Activated CD4-positive, alpha-beta T cell treated with anti-CD3 and anti-CD28 coated beads, Interleukin-2, amount 10 ng/mL, durations not matched to agents 24 days and 14 days (primary cell): ENCODE measurements at regions of chr10 and their contacts with region 1.

Region 1: DNA sequence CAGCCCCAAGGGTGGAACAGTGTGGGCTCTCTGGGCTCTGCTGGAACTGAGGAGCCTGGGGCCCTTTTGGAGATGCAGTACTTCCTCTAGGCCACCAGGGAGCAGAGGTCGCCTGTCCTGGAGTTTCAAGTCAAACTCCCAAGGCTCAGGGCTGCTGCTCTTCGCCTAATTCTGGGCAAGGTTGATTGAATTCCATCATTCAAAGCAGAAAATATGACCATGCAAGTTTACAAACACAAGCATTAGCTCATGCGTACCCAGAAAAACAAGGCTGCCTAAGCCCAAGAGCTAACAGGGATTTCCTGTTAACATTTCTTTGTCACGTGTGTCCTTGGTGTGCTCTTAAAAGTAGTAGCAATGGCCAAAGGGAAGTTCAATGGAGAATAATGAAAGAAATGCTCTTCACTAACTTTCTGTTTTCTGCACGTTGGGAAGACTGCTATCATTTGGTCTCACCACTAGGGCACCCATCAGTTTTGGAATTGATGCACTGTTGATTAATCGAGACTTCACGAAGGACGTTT is 20.1 kb downstream of the LDB3 start:
- DNase-seq: peak; percentile 84
- H3K4me3 Mint-ChIP-seq: no peak overlapping the region
- H3K27ac Mint-ChIP-seq: no peak overlapping the region
- H3K4me1 Mint-ChIP-seq: peaks cover 4% of the 10 kb centered on the region
- H3K27me3 Mint-ChIP-seq: peaks cover 1% of the 10 kb centered on the region

Region 2: DNA sequence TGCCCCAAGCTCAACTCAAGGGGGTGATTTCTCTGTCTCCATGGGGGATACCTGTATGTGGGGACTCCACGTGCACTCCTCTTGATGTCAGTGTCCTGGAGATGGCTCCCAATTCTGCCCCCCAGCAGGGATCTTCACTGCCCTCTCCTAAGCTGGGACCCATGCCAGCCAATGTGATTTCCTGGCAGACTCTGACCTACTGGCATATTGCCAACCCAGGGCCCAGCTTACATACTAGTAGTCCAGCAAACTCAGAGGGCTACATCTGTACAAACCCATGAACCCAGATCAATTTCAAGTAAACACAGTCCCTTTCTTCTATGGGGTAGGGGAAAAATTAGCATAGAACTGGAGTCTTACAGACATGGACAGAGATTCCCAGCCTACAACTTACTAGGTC is 41.8 kb after region 1 on chr10:
- intact Hi-C with region 1: no loop called
- DNase-seq: no peak
- H3K4me3 Mint-ChIP-seq: no peak overlapping the region
- H3K27ac Mint-ChIP-seq: no peak overlapping the region
- H3K4me1 Mint-ChIP-seq: no peaks in the 10 kb centered on the region
- H3K27me3 Mint-ChIP-seq: peaks cover 19% of the 10 kb centered on the region

Region 3: DNA sequence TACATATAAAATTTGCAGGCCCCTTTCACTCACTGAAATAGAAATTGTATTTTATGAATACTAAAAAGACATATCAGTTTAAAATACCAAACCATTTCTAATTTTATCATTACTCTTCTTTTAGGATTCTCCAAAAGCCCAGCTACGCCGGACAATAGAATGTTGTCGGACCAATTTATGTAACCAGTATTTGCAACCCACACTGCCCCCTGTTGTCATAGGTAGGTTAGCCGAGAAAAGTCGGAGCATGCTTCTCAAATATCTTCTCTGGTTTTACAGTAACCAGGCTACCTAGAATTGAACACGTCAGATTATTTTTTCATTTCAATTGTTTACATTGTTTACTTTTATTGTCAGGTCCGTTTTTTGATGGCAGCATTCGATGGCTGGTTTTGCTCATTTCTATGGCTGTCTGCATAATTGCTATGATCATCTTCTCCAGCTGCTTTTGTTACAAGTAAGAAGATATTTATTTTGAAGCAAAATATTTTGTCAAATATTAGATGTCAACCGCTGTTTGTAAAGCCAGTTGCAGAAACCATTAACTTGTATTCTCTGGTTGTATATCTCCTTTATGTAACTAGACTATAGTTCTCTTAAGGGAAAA is 211.3 kb after region 1 on chr10:
- intact Hi-C with region 1: loop called (anchors 1 kb)
- DNase-seq: peak; percentile 81
- H3K4me3 Mint-ChIP-seq: no peak overlapping the region
- H3K27ac Mint-ChIP-seq: no peak overlapping the region
- H3K4me1 Mint-ChIP-seq: no peaks in the 10 kb centered on the region
- H3K27me3 Mint-ChIP-seq: peaks cover 3% of the 10 kb centered on the region

Region 4: DNA sequence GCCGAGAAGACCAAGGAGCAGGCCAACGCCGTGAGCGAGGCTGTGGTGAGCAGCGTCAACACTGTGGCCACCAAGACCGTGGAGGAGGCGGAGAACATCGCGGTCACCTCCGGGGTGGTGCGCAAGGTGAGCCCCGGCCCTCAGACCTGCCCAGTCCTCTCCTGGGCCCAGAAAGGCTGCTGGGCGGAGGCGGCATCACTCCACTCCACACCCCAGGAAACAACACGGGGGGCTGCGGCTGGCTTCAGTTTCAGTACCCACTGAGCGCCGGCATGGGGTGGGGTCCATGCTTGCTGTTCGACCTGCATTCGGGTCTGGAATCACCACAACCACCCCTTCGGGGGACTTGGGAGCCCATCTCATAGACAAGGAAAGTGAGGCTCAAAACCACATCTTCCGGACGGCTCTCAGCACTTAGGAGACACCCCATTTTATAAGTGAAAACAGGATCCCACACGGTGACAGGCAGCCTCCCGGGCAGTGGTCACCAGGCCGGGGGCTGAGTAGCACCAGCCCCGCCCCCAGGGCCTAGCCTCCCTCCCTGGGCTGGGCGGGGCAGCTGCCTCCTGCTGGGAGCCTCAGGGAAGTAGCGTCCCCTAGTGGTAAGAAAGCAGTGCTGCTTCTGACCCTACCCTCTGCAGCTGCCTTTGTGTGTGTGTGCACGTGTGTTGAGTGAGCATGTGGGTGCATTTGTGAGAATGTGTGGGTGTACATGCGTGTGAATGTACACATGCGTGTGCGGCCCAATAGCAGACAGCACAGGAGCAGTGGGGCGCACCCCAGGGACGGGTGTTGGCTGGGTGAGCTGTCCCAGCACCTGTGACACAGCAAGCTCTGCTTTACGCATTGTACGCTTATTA is 271.8 kb after region 1 on chr10:
- intact Hi-C with region 1: loop called (anchors 2 kb)
- DNase-seq: peak; percentile 82
- H3K4me3 Mint-ChIP-seq: no peak overlapping the region
- H3K27ac Mint-ChIP-seq: no peak overlapping the region
- H3K4me1 Mint-ChIP-seq: peaks cover 2% of the 10 kb centered on the region
- H3K27me3 Mint-ChIP-seq: peaks cover 1% of the 10 kb centered on the region

Region 5: GRCh38 chr10:87593702-87594101 is 905.2 kb after region 1 on chr10:
- intact Hi-C with region 1: no loop called
- DNase-seq: no peak
- H3K4me3 Mint-ChIP-seq: no peak overlapping the region
- H3K27ac Mint-ChIP-seq: no peak overlapping the region
- H3K4me1 Mint-ChIP-seq: no peaks in the 10 kb centered on the region
- H3K27me3 Mint-ChIP-seq: peaks cover 21% of the 10 kb centered on the region